Activated CD4-positive, alpha-beta T cell treated with anti-CD3 and anti-CD28 coated beads for 36 hours (primary cell): ENCODE measurements at regions of chr9 and their contacts with region 1.

Region 1: GRCh38 chr9:87497604-87498045 is at the start of gene DAPK1:
- DNase-seq: peak; percentile 60
- ATAC-seq: peak; percentile 61
- H3K4me3 Mint-ChIP-seq: peak within 1 kb of the TSS; percentile 70
- H3K27ac Mint-ChIP-seq: no peak within 1 kb of the TSS
- H3K4me1 Mint-ChIP-seq: peaks cover 24% of the 10 kb centered on the region
- H3K27me3 Mint-ChIP-seq: peaks cover 52% of the 10 kb centered on the region
- total RNA-seq, gene DAPK1: 3.9 to 5.6 TPM

Region 2: GRCh38 chr9:86821006-86821845 is 676.4 kb before region 1 on chr9:
- CTCF ChIA-PET with region 1: no interaction called
- POLR2A ChIA-PET with region 1: no interaction called
- intact Hi-C with region 1: no loop called
- DNase-seq: no peak
- ATAC-seq: no peak
- H3K4me3 Mint-ChIP-seq: no peak overlapping the region
- H3K27ac Mint-ChIP-seq: no peak overlapping the region
- H3K4me1 Mint-ChIP-seq: no peaks in the 10 kb centered on the region
- H3K27me3 Mint-ChIP-seq: peaks cover 14% of the 10 kb centered on the region

Region 3: GRCh38 chr9:87336914-87337333 is 160.7 kb before region 1 on chr9:
- CTCF ChIA-PET with region 1: no interaction called
- POLR2A ChIA-PET with region 1: no interaction called
- intact Hi-C with region 1: loop called in 1 of 2 experiments (anchors 2 kb)
- DNase-seq: peak; percentile 49
- ATAC-seq: peak; percentile 57
- H3K4me3 Mint-ChIP-seq: peak overlapping the region; percentile 41
- H3K27ac Mint-ChIP-seq: peak overlapping the region; percentile 38
- H3K4me1 Mint-ChIP-seq: peaks cover 13% of the 10 kb centered on the region
- H3K27me3 Mint-ChIP-seq: peaks cover 47% of the 10 kb centered on the region

Region 4: GRCh38 chr9:87375397-87376073 is 122.1 kb before region 1 on chr9:
- CTCF ChIA-PET with region 1: no interaction called
- POLR2A ChIA-PET with region 1: interaction called, 3 read pairs
- intact Hi-C with region 1: loop called in 1 of 2 experiments (anchors 1 kb)
- DNase-seq: no peak
- ATAC-seq: no peak
- H3K4me3 Mint-ChIP-seq: no peak overlapping the region
- H3K27ac Mint-ChIP-seq: no peak overlapping the region
- H3K4me1 Mint-ChIP-seq: peaks cover 15% of the 10 kb centered on the region
- H3K27me3 Mint-ChIP-seq: peaks cover 37% of the 10 kb centered on the region

Region 5: GRCh38 chr9:87535817-87536539 is 38.4 kb after region 1 on chr9:
- CTCF ChIA-PET with region 1: no interaction called
- POLR2A ChIA-PET with region 1: no interaction called
- intact Hi-C with region 1: loop called (anchors 1 to 2 kb)
- DNase-seq: peak; percentile 69
- ATAC-seq: peak; percentile 84
- H3K4me3 Mint-ChIP-seq: peak overlapping the region; percentile 5
- H3K27ac Mint-ChIP-seq: peak overlapping the region; percentile 91
- H3K4me1 Mint-ChIP-seq: peaks cover 13% of the 10 kb centered on the region
- H3K27me3 Mint-ChIP-seq: no peaks in the 10 kb centered on the region

Region 6: GRCh38 chr9:87569518-87569917 is 71.9 kb after region 1 on chr9:
- CTCF ChIA-PET with region 1: no interaction called
- POLR2A ChIA-PET with region 1: no interaction called
- intact Hi-C with region 1: no loop called
- DNase-seq: no peak
- ATAC-seq: no peak
- H3K4me3 Mint-ChIP-seq: no peak overlapping the region
- H3K27ac Mint-ChIP-seq: no peak overlapping the region
- H3K4me1 Mint-ChIP-seq: no peaks in the 10 kb centered on the region
- H3K27me3 Mint-ChIP-seq: no peaks in the 10 kb centered on the region

Region 7: GRCh38 chr9:87662808-87663528 is 165.3 kb after region 1 on chr9:
- CTCF ChIA-PET with region 1: no interaction called
- POLR2A ChIA-PET with region 1: no interaction called
- intact Hi-C with region 1: loop called in 1 of 2 experiments (anchors 1 kb)
- DNase-seq: peak; percentile 88
- ATAC-seq: no peak
- H3K4me3 Mint-ChIP-seq: no peak overlapping the region
- H3K27ac Mint-ChIP-seq: no peak overlapping the region
- H3K4me1 Mint-ChIP-seq: peaks cover 10% of the 10 kb centered on the region
- H3K27me3 Mint-ChIP-seq: peaks cover 2% of the 10 kb centered on the region